ENCODE measurements at regions of chr19 and their contacts with region 1.

Region 1: DNA sequence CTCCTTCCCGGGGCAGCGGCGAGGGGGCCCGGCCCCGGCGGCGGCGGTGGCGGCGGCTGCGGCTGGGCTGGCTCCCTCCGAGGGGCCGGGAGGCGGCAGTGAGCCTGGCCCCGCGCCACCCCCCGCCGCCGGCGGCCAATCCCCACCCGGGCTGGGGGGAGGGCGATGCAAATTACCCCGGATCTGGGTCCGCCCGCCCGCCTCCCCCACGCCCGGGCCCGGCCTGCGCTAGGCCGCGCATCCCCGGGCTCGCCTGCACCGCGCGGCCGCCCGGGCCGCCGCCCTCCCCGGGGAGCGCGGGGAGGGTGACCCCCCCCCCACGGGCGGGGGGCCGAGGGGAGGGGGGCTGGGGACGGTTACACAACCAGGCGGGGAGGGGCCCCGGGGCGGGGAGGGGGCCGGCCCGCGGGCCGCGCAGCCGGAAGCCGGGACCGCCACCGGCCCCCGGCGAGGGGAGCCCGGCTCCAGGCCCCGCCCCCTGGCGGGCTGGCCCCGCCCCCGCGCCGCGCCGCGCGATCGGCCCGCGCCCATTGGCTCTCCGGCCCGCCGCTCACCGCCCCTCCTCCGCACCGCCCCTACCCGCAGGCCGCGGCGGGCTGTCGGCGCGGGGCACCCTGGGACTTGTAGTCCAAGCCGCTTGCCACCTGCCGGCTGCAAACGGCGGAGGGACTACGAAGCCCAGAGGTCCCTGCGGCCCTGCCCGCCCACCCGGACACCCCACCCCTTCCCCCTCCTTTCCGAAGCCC is 1.1 kb downstream of the ZBTB7A start:
- DNase-seq: peak; percentile 91 to 100 (median 98)

Region 2: GRCh38 chr19:4007021-4007835 is 58.4 kb before region 1 on chr19 and contains the start of gene PIAS4:
- intact Hi-C with region 1: loop called (anchors 1 kb)
- DNase-seq: peak; percentile 86 to 99 (median 93)

Measured in posterior cingulate gyrus (tissue), 11 donors.